WTC11 (cell line): ENCODE measurements at regions of chr17 and their contacts with region 1.

Region 1: GRCh38 chr17:56499799-56500388 is 93.6 kb upstream of the NOG start:
- DNase-seq: no peak
- ATAC-seq: no peak
- H3K4me3 Mint-ChIP-seq: no peak overlapping the region
- H3K27ac Mint-ChIP-seq: no peak overlapping the region
- H3K4me1 Mint-ChIP-seq: no peaks in the 10 kb centered on the region
- H3K27me3 Mint-ChIP-seq: no peaks in the 10 kb centered on the region
- CTCF ChIP-seq: peak; percentile 39

Region 2: DNA sequence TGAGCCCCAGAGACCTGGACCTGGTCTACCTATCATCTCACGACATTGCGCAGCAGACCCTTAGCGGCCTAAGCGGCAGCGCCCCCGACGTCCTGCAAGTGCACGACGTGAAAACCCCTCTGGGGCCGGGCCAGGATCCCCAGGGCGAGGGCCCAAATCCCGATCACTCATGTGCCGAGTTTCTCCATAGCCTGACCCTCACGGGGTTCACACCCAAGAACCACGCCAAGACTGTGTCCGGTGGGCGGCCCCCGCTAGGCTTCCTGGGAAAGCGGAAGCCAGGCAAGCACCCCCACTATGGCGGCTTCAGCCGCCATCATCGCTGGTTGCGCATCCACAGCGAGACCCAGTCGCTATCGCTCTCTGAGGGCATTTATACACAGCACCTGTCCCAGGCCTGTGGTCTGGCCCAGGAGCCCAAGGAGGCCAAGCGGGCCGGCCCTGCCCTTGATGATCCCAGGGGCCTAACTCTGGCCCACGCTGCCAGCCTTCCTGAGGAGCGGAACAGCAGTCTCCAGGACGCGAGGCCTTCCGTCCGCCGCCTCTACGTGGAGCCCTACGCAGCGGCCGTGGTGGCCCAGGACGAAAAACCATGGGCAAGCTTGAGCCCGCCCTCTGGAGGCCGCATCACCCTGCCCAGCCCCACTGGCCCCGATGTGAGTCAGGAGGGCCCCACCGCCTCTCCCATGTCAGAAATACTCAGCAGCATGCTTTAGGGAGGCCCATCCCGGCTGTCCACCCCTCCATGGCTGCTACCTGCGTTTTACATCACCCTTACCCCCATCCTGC is 10.9 kb after region 1 on chr17:
- CTCF ChIA-PET with region 1: interaction called, 24 read pairs
- POLR2A ChIA-PET with region 1: no interaction called
- DNase-seq: no peak
- ATAC-seq: peak; percentile 51
- H3K4me3 Mint-ChIP-seq: no peak overlapping the region
- H3K27ac Mint-ChIP-seq: no peak overlapping the region
- H3K4me1 Mint-ChIP-seq: no peaks in the 10 kb centered on the region
- H3K27me3 Mint-ChIP-seq: no peaks in the 10 kb centered on the region
- CTCF ChIP-seq: no peak

Region 3: DNA sequence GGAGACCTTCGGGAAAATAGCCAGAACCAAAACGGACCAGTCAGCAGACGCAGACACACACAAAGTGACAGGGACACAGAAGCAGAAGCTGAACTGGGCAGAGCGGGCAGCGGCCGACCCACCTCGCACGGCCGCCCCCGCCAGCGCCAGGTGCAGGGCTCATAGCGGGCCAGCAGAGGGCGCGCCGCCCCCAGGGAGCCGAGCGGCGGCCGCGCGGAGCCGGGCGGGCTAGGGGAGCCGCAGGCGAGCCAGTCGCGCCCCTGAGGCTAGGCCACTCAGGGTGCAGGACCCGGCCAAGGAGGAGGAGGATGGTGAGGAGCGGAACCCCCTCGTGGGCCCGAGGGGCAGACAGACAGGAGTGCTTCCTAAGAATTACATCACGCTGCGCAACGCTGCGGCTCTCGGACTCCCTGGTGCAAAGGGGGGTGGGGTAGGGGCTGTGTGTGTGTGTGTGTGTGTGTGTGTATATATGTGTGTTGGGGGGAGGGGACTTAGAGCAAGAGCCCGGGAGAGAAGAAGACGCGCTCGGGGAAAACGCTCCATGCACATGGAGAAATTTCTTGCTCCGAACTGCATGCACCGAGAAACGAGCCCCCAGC is 92.7 kb after region 1 on chr17:
- CTCF ChIA-PET with region 1: interaction called, 15 read pairs
- POLR2A ChIA-PET with region 1: no interaction called
- DNase-seq: peak; percentile 77
- ATAC-seq: peak; percentile 49
- H3K4me3 Mint-ChIP-seq: peak overlapping the region; percentile 73
- H3K27ac Mint-ChIP-seq: no peak overlapping the region
- H3K4me1 Mint-ChIP-seq: peaks cover 15% of the 10 kb centered on the region
- H3K27me3 Mint-ChIP-seq: peaks cover 58% of the 10 kb centered on the region
- CTCF ChIP-seq: peak; percentile 96

Region 4: DNA sequence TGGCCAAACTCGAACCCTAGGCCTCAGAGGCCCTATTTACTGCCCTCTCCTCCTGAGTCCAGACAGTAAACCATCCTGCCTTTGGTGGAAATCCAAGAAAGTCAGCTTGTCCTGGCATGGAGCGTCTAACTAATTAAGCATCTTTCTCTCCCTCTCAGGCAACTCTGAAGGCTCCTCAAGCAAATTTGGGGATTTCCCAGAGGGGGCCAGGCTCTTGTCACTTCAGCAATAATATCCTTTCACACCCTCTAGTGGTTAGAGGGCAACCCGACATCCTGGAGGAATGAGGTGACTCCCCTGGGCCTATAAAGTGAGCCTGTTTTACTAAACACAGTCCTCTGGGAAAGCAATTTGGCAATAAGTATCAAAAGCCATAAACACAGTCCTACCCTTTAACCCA is 154.0 kb after region 1 on chr17:
- CTCF ChIA-PET with region 1: interaction called, 18 read pairs
- POLR2A ChIA-PET with region 1: no interaction called
- DNase-seq: peak; percentile 63
- ATAC-seq: peak; percentile 99
- H3K4me3 Mint-ChIP-seq: no peak overlapping the region
- H3K27ac Mint-ChIP-seq: no peak overlapping the region
- H3K4me1 Mint-ChIP-seq: peaks cover 8% of the 10 kb centered on the region
- H3K27me3 Mint-ChIP-seq: peaks cover 4% of the 10 kb centered on the region
- CTCF ChIP-seq: peak; percentile 43; the same call in 1 of the 2 replicates

Region 5: GRCh38 chr17:56779898-56780733 is 280.2 kb after region 1 on chr17:
- CTCF ChIA-PET with region 1: interaction called, 31 read pairs
- POLR2A ChIA-PET with region 1: no interaction called
- DNase-seq: peak; percentile 81
- ATAC-seq: peak; percentile 97
- H3K4me3 Mint-ChIP-seq: peak overlapping the region; percentile 56
- H3K27ac Mint-ChIP-seq: no peak overlapping the region
- H3K4me1 Mint-ChIP-seq: peaks cover 12% of the 10 kb centered on the region
- H3K27me3 Mint-ChIP-seq: peaks cover 48% of the 10 kb centered on the region
- CTCF ChIP-seq: peak; percentile 97